Caco-2 (cell line): ENCODE measurements at regions of chr17 and their contacts with region 1.

Region 1: DNA sequence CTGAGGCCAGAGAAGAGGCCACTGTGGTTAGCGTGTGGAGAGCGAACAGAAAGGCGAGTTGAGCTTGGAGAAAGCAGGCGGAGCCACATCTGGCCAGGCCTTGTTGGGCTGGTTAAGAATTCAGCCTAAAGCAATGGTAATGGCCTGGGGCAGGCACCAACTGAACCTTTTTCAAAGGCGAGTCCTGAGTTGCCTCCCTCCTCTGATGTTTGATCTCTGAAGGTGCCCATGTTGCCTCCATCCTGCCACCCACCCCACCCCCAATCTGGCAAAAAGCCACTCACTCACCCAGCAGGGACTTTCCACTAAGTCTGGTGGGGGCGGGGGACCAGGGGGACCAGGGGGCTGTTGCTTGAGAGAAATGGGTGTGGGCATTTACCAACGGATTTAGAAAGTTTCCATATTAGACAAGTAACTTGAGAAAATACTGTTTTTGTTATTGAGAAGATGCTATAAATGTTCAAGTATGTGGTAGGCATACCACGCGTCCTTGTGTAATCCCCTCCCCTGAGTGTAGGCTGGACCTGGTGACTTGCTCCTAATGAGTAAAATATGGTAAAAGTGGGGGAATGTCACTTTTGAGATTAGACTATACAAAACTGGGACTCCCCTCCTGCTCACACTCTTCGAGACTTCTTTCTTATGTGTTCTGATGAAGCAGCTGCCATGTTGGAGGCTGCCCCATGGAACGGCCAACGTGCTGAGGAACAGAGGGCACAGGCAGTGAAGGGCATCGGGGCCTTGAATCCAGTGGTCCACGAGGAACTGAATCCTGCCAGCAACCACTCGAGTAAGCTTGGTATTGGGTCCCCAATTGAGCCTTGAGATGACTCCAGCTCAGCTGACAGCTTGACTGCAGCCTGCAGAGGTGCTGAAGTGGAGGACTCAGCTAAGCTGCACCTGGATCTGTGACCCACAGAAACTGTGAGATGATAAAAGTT is 29.9 kb upstream of the TNS4 start:
- DNase-seq: no peak
- H3K4me3 ChIP-seq: no peak overlapping the region
- H3K4me3 Mint-ChIP-seq: no peak overlapping the region
- H3K27ac Mint-ChIP-seq: no peak overlapping the region
- H3K4me1 ChIP-seq: 0 out of 2 replicates have a peak, but pooled peaks cover 9% of the 10 kb centered on the region
- H3K4me1 Mint-ChIP-seq: no peaks in the 10 kb centered on the region
- H3K27me3 ChIP-seq: no peaks in the 10 kb centered on the region
- H3K27me3 Mint-ChIP-seq: no peaks in the 10 kb centered on the region
- CTCF ChIP-seq: no peak

Region 2: GRCh38 chr17:40362696-40363110 is 168.6 kb before region 1 on chr17:
- CTCF ChIA-PET with region 1: interaction called, 28 read pairs
- POLR2A ChIA-PET with region 1: interaction called, 6 read pairs
- intact Hi-C with region 1: loop called (anchors 1 kb)
- DNase-seq: peak; percentile 89 to 94
- H3K4me3 ChIP-seq: peak overlapping the region; percentile 94
- H3K4me3 Mint-ChIP-seq: peak overlapping the region; percentile 69
- H3K27ac Mint-ChIP-seq: peak overlapping the region; percentile 11
- H3K4me1 ChIP-seq: peaks cover 5% of the 10 kb centered on the region; the same call in 1 of the 2 replicates
- H3K4me1 Mint-ChIP-seq: peaks cover 6% of the 10 kb centered on the region
- H3K27me3 ChIP-seq: no peaks in the 10 kb centered on the region
- H3K27me3 Mint-ChIP-seq: no peaks in the 10 kb centered on the region
- CTCF ChIP-seq: peak; percentile 62 to 93

Region 3: GRCh38 chr17:40417609-40418427 is 113.5 kb before region 1 on chr17 and contains the start of gene TOP2A:
- CTCF ChIA-PET with region 1: interaction called, 30 read pairs
- POLR2A ChIA-PET with region 1: interaction called, 9 read pairs
- intact Hi-C with region 1: no loop called
- DNase-seq: peak; percentile 99 to 100
- H3K4me3 ChIP-seq: peak within 1 kb of the TSS; percentile 89
- H3K4me3 Mint-ChIP-seq: peak within 1 kb of the TSS; percentile 99
- H3K27ac Mint-ChIP-seq: peak within 1 kb of the TSS; percentile 99
- H3K4me1 ChIP-seq: peaks cover 16% of the 10 kb centered on the region; the same call in 1 of the 2 replicates
- H3K4me1 Mint-ChIP-seq: no peaks in the 10 kb centered on the region
- H3K27me3 ChIP-seq: no peaks in the 10 kb centered on the region
- H3K27me3 Mint-ChIP-seq: no peaks in the 10 kb centered on the region
- CTCF ChIP-seq: no peak
- total RNA-seq, gene TOP2A: 226 and 237 TPM in 2 replicates

Region 4: DNA sequence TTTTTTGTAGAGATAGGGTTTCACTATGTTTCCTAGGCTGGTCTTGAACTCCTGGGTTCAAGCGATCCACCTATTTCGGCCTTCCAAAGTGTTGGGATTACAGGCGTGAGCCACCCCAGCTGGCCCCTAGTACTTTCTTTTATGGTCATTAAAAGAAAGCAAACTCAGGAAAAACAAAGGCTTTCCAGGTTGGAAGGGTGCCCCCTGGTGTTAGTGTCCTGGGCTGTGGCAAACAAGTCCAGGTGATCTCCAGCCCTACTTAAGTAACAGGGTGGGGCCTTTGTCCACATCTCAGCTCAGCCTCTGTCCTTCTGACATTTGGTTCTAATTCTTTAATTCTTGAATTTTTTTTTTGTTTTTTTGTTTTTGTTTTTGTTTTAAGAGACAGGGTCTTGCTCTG is 81.1 kb before region 1 on chr17:
- CTCF ChIA-PET with region 1: interaction called, 30 read pairs
- POLR2A ChIA-PET with region 1: no interaction called
- intact Hi-C with region 1: no loop called
- DNase-seq: peak; percentile 74 to 77
- H3K4me3 ChIP-seq: no peak overlapping the region
- H3K4me3 Mint-ChIP-seq: no peak overlapping the region
- H3K27ac Mint-ChIP-seq: no peak overlapping the region
- H3K4me1 ChIP-seq: peaks cover 17% of the 10 kb centered on the region
- H3K4me1 Mint-ChIP-seq: peaks cover 9% of the 10 kb centered on the region
- H3K27me3 ChIP-seq: no peaks in the 10 kb centered on the region
- H3K27me3 Mint-ChIP-seq: no peaks in the 10 kb centered on the region
- CTCF ChIP-seq: peak; percentile 48 to 69

Region 5: GRCh38 chr17:40499551-40500174 is 31.7 kb before region 1 on chr17:
- CTCF ChIA-PET with region 1: interaction called, 10 read pairs
- POLR2A ChIA-PET with region 1: no interaction called
- intact Hi-C with region 1: no loop called
- DNase-seq: peak; percentile 55 to 68
- H3K4me3 ChIP-seq: no peak overlapping the region
- H3K4me3 Mint-ChIP-seq: no peak overlapping the region
- H3K27ac Mint-ChIP-seq: no peak overlapping the region
- H3K4me1 ChIP-seq: peaks cover 5% of the 10 kb centered on the region; the same call in 1 of the 2 replicates
- H3K4me1 Mint-ChIP-seq: peaks cover 6% of the 10 kb centered on the region
- H3K27me3 ChIP-seq: no peaks in the 10 kb centered on the region
- H3K27me3 Mint-ChIP-seq: no peaks in the 10 kb centered on the region
- CTCF ChIP-seq: no peak

Region 6: DNA sequence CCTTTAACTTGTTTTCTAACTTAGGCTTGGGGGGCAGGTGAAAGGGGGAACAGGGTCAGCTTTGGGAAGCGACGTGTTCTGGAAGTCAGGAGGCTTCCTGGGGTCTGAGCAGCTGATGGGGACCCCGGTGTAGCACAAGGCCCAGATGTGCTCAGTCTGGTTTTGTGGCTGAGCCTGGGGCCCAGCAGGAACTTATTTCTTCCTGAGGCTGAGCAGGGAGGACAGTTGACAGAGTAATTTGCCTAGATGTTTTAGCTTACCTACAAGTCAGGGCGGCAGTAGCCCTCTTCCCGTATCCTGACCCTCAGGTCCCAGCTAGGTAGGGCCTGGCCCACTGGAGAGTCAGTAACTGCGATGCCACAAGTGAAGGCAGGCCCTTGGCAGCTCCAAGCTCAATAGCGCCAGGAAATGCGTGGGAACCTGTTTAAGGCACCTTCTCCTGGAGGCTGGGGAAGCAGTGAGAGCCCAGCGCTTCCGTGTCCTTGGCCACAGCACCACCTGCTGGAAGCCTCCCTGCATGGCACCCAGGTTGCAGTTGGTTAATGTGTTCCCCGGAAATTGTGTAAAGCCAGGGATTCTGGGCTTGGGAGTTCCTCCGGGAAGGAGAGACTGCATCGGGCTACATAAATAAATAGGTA is 28.8 kb after region 1 on chr17:
- CTCF ChIA-PET with region 1: interaction called, 99 read pairs
- POLR2A ChIA-PET with region 1: no interaction called
- intact Hi-C with region 1: loop called (anchors 1 kb)
- DNase-seq: peak; percentile 90 to 94
- H3K4me3 ChIP-seq: no peak overlapping the region
- H3K4me3 Mint-ChIP-seq: peak overlapping the region; percentile 30
- H3K27ac Mint-ChIP-seq: no peak overlapping the region
- H3K4me1 ChIP-seq: peaks cover 8% of the 10 kb centered on the region; the same call in 1 of the 2 replicates
- H3K4me1 Mint-ChIP-seq: peaks cover 6% of the 10 kb centered on the region
- H3K27me3 ChIP-seq: no peaks in the 10 kb centered on the region
- H3K27me3 Mint-ChIP-seq: peaks cover 6% of the 10 kb centered on the region
- CTCF ChIP-seq: peak; percentile 97 to 99